SK-N-SH (cell line): ENCODE measurements at regions of chr17 and their contacts with region 1.

Region 1: GRCh38 chr17:48131216-48131824 is 23.8 kb downstream of the SNX11 start:
- DNase-seq: peak; percentile 82
- H3K4me3 ChIP-seq: no peak overlapping the region; a peak in 1 of 4 replicates
- H3K27ac ChIP-seq: no peak overlapping the region
- H3K4me1 ChIP-seq: peaks cover 7 to 17% of the 10 kb centered on the region in 2 experiments; a peak in 2 of 4 replicates
- H3K27me3 ChIP-seq: peaks cover 8% of the 10 kb centered on the region; the same call in 1 of the 2 replicates
- CTCF ChIP-seq: peak; percentile 99
- EP300 ChIP-seq: no peak
- RAD21 ChIP-seq: peak; percentile 99

Region 2: GRCh38 chr17:48068491-48068961 is 62.8 kb before region 1 on chr17:
- CTCF ChIA-PET with region 1: interaction called, 127 read pairs
- POLR2A ChIA-PET with region 1: no interaction called
- DNase-seq: no peak
- H3K4me3 ChIP-seq: no peak overlapping the region
- H3K27ac ChIP-seq: 0 out of 4 replicates have a peak overlapping the region, but pooled peaks of 1 of the 2 experiments have one; percentile 10
- H3K4me1 ChIP-seq: no peaks in the 10 kb centered on the region; a peak in 2 of 4 replicates
- H3K27me3 ChIP-seq: no peaks in the 10 kb centered on the region
- CTCF ChIP-seq: peak; percentile 62
- EP300 ChIP-seq: no peak
- RAD21 ChIP-seq: 0 out of 2 replicates have a peak, but pooled peaks have one; percentile 7

Region 3: DNA sequence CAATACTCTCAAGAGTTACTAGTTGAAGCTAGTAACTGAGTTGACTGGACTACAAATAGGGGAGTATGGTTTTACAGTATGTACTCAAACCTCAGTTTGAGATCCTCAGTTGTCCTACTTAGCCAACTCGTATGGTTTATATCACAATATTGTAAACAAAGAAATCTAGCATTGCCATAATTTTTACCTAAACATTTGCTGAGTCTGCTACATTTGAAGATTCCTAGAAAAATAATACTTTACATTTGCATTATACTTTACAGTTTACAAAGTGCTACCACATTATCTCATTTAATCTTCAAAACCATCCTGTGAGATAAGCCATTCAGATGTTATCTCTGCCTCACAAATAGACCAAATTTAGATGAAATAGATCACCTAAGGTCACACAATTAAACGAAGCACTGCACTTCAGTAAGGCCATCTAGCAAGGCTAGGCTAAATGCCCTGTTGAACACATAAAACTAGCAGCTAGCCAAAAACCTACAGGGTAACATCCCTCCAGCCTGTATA is 46.3 kb before region 1 on chr17:
- CTCF ChIA-PET with region 1: interaction called, 127 read pairs
- POLR2A ChIA-PET with region 1: no interaction called
- DNase-seq: no peak
- H3K4me3 ChIP-seq: no peak overlapping the region
- H3K27ac ChIP-seq: no peak overlapping the region
- H3K4me1 ChIP-seq: peaks cover 4 to 9% of the 10 kb centered on the region in 2 experiments; a peak in 2 of 4 replicates
- H3K27me3 ChIP-seq: no peaks in the 10 kb centered on the region
- CTCF ChIP-seq: no peak
- EP300 ChIP-seq: no peak
- RAD21 ChIP-seq: no peak

Region 4: GRCh38 chr17:48101012-48101720 is 30.2 kb before region 1 on chr17 and contains the start of gene CBX1:
- CTCF ChIA-PET with region 1: interaction called, 19 read pairs
- POLR2A ChIA-PET with region 1: no interaction called
- DNase-seq: peak; percentile 98
- H3K4me3 ChIP-seq: peak within 1 kb of the TSS; percentile 66 to 90
- H3K27ac ChIP-seq: peak within 1 kb of the TSS; percentile 81 to 91
- H3K4me1 ChIP-seq: peaks cover 3 to 6% of the 10 kb centered on the region in 2 experiments; a peak in 2 of 4 replicates
- H3K27me3 ChIP-seq: no peaks in the 10 kb centered on the region
- CTCF ChIP-seq: no peak; the same call in 1 of the 2 replicates
- EP300 ChIP-seq: no peak; a peak in 1 of 4 replicates
- RAD21 ChIP-seq: no peak
- polyA plus RNA-seq, gene CBX1: 102 and 112 TPM in 2 replicates

Region 5: GRCh38 chr17:48113201-48113676 is 18.1 kb before region 1 on chr17:
- CTCF ChIA-PET with region 1: interaction called, 41 read pairs
- POLR2A ChIA-PET with region 1: no interaction called
- DNase-seq: no peak
- H3K4me3 ChIP-seq: no peak overlapping the region
- H3K27ac ChIP-seq: no peak overlapping the region
- H3K4me1 ChIP-seq: peaks cover 4 to 7% of the 10 kb centered on the region in 2 experiments; a peak in 3 of 4 replicates
- H3K27me3 ChIP-seq: no peaks in the 10 kb centered on the region
- CTCF ChIP-seq: no peak
- EP300 ChIP-seq: no peak
- RAD21 ChIP-seq: no peak

Region 6: DNA sequence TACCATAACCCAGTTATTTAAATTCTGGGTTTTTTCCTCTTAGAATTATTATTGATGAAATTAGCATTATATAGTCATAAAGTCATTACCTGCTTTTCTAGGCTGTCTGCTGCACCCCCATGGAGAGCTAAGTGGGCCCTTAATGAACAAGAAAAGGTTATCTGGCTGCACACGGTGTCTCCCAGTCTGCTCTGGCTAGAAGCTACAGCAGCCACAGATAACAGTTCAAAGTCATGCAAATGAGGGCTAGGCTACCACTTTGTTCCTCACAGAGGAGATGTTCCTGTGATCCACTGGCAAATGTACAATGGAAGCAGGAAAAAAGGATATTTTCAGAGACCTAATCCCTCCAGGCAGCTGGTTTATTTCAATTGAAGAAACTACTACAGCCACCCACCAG is 88.3 kb after region 1 on chr17:
- CTCF ChIA-PET with region 1: no interaction called
- POLR2A ChIA-PET with region 1: no interaction called
- DNase-seq: no peak
- H3K4me3 ChIP-seq: no peak overlapping the region
- H3K27ac ChIP-seq: no peak overlapping the region
- H3K4me1 ChIP-seq: no peaks in the 10 kb centered on the region
- H3K27me3 ChIP-seq: peaks cover 76% of the 10 kb centered on the region
- CTCF ChIP-seq: no peak
- EP300 ChIP-seq: no peak
- RAD21 ChIP-seq: no peak